Heart left ventricle (tissue), 16 donors: ENCODE measurements at regions of chr4 and their contacts with region 1.

Region 1: GRCh38 chr4:138174981-138175794 is 67.0 kb downstream of the SLC7A11 start:
- DNase-seq: peak in 2 of 5 donors; percentile 29 to 30
- ATAC-seq: peak in 3 of 4 donors; percentile 70 to 82 (median 72)
- H3K4me3 ChIP-seq: no peak overlapping the region
- H3K27ac ChIP-seq: no peak overlapping the region
- H3K4me1 ChIP-seq: peaks cover 0 to 13% (median 0%) of the 10 kb centered on the region in 12 donors
- H3K27me3 ChIP-seq: no peaks in the 10 kb centered on the region
- CTCF ChIP-seq: peak in 1 of 12 donors; percentile 7
- POLR2A ChIP-seq: no peak

Region 2: GRCh38 chr4:138090150-138090917 is 84.9 kb before region 1 on chr4:
- intact Hi-C with region 1: loop called in 6 of 10 experiments (anchors 5 to 10 kb)
- DNase-seq: peak in 2 of 5 donors; percentile 42 to 43
- ATAC-seq: peak in 3 of 4 donors; percentile 74 to 86 (median 74)
- H3K4me3 ChIP-seq: peak overlapping the region in 3 of 12 donors; percentile 18 to 32 (median 28)
- H3K27ac ChIP-seq: no peak overlapping the region
- H3K4me1 ChIP-seq: peaks cover 0 to 14% (median 2%) of the 10 kb centered on the region in 12 donors
- H3K27me3 ChIP-seq: no peaks in the 10 kb centered on the region
- CTCF ChIP-seq: peak; percentile 69 to 89 (median 80)
- POLR2A ChIP-seq: no peak